ENCODE measurements at regions of chr7 and their contacts with region 1.

Region 1: GRCh38 chr7:102279537-102280400 is 6.9 kb upstream of the SH2B2 start:
- DNase-seq: peak; percentile 57 to 60
- ATAC-seq: peak; percentile 83 to 96
- H3K4me3 ChIP-seq: no peak overlapping the region
- H3K27ac ChIP-seq: no peak overlapping the region
- H3K4me1 ChIP-seq: 0 out of 3 replicates have a peak, but pooled peaks cover 3% of the 10 kb centered on the region
- CTCF ChIP-seq: peak; percentile 90
- EP300 ChIP-seq: no peak
- POLR2A ChIP-seq: no peak
- RAD21 ChIP-seq: peak; percentile 92 to 96

Region 2: DNA sequence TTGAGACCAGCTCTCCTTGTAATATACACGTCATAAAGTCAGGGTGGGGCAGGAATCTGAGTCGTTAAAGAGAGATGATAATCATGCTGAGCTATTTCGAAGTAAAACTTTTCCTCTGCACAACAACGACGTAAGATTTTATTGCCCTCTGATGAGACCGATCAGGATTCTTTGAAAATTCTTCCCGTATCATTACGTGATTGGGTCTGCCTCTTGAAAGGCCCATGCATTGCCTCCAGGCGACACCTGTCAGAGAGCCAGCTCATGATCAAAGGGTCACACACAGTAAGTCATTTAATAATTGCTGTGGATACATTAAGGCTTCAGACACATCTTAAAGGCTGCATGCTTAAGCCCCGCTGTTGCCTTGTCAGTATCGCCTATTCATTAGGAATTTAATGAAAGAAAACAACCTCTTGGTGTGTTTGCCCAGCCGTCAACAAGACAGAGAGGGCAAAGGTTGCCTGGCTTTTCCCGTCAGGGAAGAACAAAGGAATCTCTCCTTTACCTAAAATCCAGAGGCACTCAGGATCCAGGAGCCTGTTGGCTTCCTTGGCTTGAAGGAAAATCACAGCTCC is 182.1 kb before region 1 on chr7:
- CTCF ChIA-PET with region 1: no interaction called
- POLR2A ChIA-PET with region 1: no interaction called
- DNase-seq: peak in 1 of 2 experiments; percentile 65
- ATAC-seq: no peak
- H3K4me3 ChIP-seq: no peak overlapping the region
- H3K27ac ChIP-seq: peak overlapping the region in 1 of 2 experiments; percentile 67; a peak in 4 of 6 replicates
- H3K4me1 ChIP-seq: peaks cover 20% of the 10 kb centered on the region
- CTCF ChIP-seq: no peak
- EP300 ChIP-seq: no peak
- POLR2A ChIP-seq: no peak
- RAD21 ChIP-seq: no peak

Region 3: GRCh38 chr7:102390697-102391484 is 111.1 kb after region 1 on chr7:
- CTCF ChIA-PET with region 1: interaction called, 78 read pairs
- POLR2A ChIA-PET with region 1: no interaction called
- DNase-seq: peak; percentile 82 to 85
- ATAC-seq: peak; percentile 98
- H3K4me3 ChIP-seq: no peak overlapping the region
- H3K27ac ChIP-seq: no peak overlapping the region
- H3K4me1 ChIP-seq: peaks cover 6% of the 10 kb centered on the region
- CTCF ChIP-seq: peak; percentile 91
- EP300 ChIP-seq: no peak
- POLR2A ChIP-seq: no peak
- RAD21 ChIP-seq: peak; percentile 85 to 87

Region 4: DNA sequence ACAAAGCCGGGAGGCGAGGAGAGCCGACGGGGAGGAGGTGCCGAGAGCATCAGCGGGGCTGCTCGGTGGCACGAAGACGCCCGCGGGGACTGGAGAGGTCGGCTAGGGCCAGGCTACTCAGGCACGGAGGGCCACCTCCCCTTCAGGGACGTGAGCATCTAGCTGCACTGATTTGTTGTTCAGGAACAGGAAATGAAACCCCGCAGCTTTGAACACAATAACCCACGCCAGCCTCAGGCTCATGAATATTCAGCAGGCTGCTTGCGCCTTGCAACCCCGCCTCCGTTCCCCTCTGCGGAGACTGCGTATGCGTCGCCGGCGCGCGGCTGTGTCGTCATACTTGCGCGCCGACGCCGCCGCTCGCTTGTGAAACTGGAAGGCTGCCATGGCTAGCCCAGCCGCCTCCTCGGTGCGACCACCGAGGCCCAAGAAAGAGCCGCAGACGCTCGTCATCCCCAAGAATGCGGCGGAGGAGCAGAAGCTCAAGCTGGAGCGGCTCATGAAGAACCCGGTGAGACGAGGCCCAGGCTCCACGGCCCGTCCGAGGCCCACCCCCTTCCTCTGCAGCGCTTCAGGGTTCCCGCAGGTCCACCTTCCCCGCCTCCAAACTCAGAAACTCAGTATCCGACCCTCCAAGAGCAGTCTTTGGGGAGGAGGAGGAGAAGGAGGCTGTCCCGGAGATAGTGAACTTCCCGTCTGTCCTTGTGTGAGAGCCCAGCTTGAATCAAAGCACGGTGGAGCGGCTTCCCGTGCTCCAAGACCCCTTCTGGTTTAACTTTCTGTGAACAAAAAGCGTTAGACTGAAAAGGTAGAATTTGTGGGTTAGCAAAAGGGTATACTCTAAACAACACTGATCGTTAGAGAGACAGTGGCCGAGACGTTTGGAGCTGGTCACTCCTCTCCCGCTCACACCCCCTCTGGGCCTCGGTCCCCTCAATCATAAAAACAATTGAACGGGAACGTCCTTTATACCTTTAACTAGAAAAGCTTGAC is 116.6 kb after region 1 on chr7 and contains the start of gene PRKRIP1:
- CTCF ChIA-PET with region 1: interaction called, 67 read pairs
- POLR2A ChIA-PET with region 1: no interaction called
- DNase-seq: peak; percentile 89 to 92
- ATAC-seq: peak; percentile 96
- H3K4me3 ChIP-seq: peak within 1 kb of the TSS; percentile 88
- H3K27ac ChIP-seq: peak within 1 kb of the TSS; percentile 81 to 89
- H3K4me1 ChIP-seq: peaks cover 11% of the 10 kb centered on the region
- CTCF ChIP-seq: no peak
- EP300 ChIP-seq: no peak
- POLR2A ChIP-seq: peak; percentile 8; the same call in 1 of the 2 replicates
- RAD21 ChIP-seq: no peak
- polyA plus RNA-seq, gene PRKRIP1: 11.5 and 15.4 TPM in 2 replicates

Measured in A549 (cell line).